G401 (cell line): ENCODE measurements at regions of chr20 and their contacts with region 1.

Region 1: GRCh38 chr20:17594443-17594842 is 24.6 kb downstream of the DSTN start:
- DNase-seq: peak; percentile 66

Region 2: GRCh38 chr20:17518339-17519052 is 75.9 kb before region 1 on chr20:
- in situ Hi-C with region 1: no loop called
- DNase-seq: no peak

Region 3: DNA sequence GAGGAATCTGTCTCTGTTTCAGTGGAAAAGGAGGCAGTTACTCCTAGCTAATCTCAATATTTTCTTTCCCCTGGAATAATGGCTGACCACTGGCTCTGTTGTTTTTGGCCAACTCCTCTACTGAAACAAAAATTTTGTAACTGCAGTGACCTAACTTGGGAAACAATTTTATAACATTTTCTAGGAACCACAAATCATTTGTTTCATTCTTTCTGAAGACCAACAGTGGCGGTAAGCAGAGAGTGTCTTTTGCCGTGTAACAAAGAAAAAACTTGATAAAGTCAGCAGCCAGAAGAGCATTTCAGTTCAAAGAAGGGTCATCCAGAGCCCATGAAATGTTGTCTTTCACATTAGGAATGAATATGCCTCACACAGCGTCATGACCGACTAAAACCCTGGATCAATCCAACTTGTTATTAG is 51.4 kb before region 1 on chr20:
- in situ Hi-C with region 1: loop called (anchors 5 kb)
- DNase-seq: no peak

Region 4: DNA sequence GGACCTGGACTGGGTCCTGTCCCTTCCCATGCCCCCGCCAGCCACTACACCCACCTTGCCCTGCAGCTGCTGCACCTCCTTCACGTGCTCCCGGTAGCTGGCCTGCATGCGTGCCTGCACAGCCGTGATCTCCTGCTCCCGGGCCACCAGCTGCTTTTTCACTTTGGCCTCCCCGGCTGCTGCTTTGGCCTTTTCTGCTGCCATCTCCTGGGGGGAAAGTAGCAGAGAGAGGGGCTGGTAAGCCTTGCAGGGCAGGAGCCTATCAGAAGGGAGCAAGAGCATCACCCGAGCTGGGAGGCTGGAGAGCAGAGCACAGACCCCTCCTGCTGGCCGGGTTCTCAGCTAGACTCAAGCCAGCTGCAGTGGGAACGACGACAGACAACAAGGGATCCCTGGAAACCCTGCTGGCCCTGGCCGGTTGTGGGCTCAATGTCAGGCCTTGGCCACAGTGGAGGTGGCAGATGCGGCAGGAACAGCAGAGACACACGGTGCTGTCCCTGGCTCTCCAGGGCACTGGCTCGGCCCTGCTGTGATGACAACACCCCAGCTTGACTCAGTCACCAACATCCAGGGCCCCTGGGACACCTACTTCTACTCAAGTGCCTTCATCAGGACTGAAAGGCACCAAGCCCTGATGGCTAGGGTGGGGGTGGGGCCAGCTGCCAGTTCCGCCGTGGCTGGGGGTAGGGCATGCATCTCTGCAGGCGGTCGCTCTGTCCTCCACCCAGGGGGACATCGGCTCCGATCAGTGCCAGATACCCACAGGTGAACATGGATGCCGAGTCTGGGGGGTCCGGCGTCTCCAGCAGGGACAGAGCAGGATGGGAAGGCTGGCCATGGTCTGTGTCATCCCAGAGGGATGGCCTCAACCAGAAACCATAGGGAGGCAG is 42.3 kb after region 1 on chr20:
- in situ Hi-C with region 1: no loop called
- DNase-seq: no peak